ENCODE measurements at regions of chr12 and their contacts with region 1.

Region 1: GRCh38 chr12:14845350-14845750 is 2.0 kb upstream of the ART4 start:
- DNase-seq: peak; percentile 40 to 52
- H3K4me3 ChIP-seq: no peak overlapping the region
- H3K27ac ChIP-seq: no peak overlapping the region
- H3K4me1 ChIP-seq: peaks cover 33% of the 10 kb centered on the region
- H3K27me3 ChIP-seq: no peaks in the 10 kb centered on the region
- CTCF ChIP-seq: peak; percentile 93

Region 2: DNA sequence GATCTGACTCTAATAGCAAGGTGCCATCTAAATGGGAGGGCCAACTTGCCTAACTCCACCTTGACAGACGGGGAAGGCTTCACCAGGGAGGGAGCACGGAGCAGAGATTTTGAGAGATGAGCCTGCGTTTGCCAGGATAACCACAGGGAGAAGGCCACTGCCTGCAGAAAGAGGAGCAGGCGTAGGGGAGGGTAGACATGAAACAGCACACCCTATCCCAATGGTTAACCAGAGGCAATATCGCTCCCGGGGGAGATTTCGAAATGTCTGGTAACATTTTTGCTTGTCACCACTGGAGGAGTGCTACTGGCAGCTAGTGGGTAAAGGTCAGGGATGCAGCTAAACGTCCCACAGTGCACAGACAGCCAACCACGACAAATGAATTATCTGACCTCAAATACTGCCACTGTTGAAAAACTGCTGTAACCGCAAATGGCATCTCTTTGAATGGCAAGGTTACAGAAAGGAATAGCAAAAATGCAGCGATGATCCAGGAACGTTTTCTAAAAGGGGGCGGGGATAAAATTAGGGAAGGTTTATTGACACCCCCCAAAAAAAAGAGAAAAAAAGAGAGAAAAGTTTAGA is 605.9 kb before region 1 on chr12:
- CTCF ChIA-PET with region 1: no interaction called
- POLR2A ChIA-PET with region 1: no interaction called
- intact Hi-C with region 1: loop called (anchors 10 kb)
- DNase-seq: peak; percentile 84 to 93
- H3K4me3 ChIP-seq: peak overlapping the region; percentile 51
- H3K27ac ChIP-seq: peak overlapping the region; percentile 94
- H3K4me1 ChIP-seq: peaks cover 28% of the 10 kb centered on the region
- H3K27me3 ChIP-seq: no peaks in the 10 kb centered on the region
- CTCF ChIP-seq: no peak

Region 3: DNA sequence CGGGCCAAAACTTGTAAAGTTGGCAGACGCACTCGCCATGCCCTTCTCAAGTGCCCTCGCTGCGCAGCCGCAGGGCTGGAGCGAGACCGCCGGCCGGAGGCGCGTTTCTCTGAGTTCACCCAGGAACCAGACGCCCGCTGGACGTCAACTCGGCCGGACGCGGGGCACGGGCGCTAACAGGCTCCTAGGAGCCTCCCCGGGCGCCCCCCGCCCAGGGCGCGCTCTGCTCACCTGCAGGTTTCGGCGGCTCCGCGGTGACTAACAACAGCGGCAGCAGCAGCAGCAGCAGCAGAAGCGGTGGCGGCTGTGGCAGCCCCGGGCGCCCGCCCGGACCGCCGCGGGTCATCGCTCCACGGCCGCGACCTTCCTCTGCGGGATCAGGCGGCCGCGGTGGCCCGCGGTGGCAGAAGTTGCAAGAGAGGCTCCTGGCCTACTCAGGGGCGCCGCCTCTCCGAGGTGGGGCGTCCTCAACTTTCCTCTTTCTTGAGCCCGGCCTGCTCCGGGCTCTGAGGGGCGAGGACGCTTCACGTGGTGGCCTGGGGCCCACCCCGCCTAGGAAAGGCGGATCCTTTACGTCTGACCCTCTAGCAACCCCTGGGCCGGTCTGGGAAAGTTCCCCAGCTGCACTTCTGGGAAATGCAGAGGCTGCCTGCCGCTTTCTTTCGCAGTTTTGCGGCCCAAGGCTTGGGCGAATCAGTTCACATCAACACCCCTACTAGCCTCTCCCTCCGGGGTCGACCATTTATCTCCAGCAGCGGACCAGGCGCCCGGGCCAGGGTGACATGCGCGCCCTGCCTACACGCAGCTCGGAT is 277.8 kb before region 1 on chr12 and contains the start of gene PLBD1:
- CTCF ChIA-PET with region 1: no interaction called
- POLR2A ChIA-PET with region 1: no interaction called
- intact Hi-C with region 1: no loop called
- DNase-seq: peak; percentile 40 to 59
- H3K4me3 ChIP-seq: peak within 1 kb of the TSS; percentile 60
- H3K27ac ChIP-seq: no peak within 1 kb of the TSS
- H3K4me1 ChIP-seq: no peaks in the 10 kb centered on the region
- H3K27me3 ChIP-seq: no peaks in the 10 kb centered on the region
- CTCF ChIP-seq: no peak
- total RNA-seq, gene PLBD1: 13.8 and 17.8 TPM in 2 replicates

Region 4: DNA sequence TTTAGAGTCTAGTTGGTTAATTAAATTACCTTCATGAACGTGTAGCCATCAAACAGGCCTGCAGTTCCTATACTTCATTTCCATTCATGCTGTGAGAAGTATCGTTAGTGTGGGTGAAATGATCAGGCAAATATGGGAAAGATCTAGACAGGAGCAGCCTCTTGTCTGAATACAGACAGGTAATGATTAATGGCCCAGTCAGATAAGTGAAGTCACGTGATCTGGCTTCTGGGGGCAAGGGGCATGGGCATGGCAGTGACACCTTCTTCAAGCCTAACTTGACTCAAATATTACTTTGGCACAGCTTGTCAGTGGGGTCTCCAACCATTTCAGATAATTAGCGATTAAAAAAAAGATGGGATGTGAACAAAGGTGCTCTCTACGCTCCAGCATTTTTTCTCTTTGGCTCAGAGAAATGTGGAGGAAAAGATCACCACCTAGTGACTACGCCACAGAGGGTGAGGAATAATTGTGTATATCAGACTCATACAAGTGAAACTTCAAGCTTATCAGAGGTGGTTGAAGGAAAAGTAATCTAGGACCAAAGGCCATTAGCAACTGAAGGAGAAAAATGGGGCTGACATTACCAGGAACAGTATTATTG is 166.7 kb before region 1 on chr12:
- CTCF ChIA-PET with region 1: no interaction called
- POLR2A ChIA-PET with region 1: no interaction called
- intact Hi-C with region 1: no loop called
- DNase-seq: no peak
- H3K4me3 ChIP-seq: no peak overlapping the region
- H3K27ac ChIP-seq: no peak overlapping the region
- H3K4me1 ChIP-seq: no peaks in the 10 kb centered on the region
- H3K27me3 ChIP-seq: no peaks in the 10 kb centered on the region; the same call in 1 of the 2 replicates
- CTCF ChIP-seq: no peak

Region 5: DNA sequence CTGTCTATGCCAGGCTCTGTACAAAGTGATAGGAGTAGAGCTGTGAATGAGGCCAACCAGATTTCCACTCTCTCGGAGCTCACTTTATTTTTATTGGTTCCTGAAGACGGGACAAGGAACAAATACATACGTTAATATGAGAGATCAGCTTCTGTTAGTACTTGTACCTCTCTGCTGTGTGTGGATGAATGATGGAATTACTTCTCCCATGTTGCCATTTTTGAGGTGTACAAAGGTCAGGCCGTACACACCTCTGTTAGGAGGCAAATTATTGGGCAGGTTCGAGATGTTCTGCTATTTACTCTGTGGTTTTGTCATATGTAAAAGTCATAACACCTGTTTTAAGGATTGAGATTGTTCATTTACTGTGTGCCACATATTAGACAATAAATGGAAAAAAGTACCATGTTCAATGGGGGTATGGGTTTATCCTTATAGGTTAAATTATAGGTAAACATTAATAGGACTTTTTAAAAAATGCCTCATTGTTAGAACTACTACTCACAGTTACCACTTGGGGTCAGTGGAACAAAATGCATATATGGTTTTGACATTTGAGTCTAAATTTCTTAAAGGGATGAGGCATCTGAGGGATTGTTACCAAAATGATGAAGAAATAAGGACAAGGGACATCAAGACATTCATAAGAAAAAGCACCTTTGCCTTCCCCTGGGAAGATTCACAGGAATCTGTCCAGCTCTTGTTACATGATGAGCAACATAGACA is 69.0 kb before region 1 on chr12:
- CTCF ChIA-PET with region 1: interaction called, 3 read pairs
- POLR2A ChIA-PET with region 1: no interaction called
- intact Hi-C with region 1: loop called (anchors 1 kb)
- DNase-seq: peak in 1 of 2 experiments; percentile 49
- H3K4me3 ChIP-seq: peak overlapping the region; percentile 91
- H3K27ac ChIP-seq: peak overlapping the region; percentile 89
- H3K4me1 ChIP-seq: peaks cover 41% of the 10 kb centered on the region
- H3K27me3 ChIP-seq: no peaks in the 10 kb centered on the region
- CTCF ChIP-seq: peak; percentile 46; the same call in 1 of the 2 replicates

Region 6: DNA sequence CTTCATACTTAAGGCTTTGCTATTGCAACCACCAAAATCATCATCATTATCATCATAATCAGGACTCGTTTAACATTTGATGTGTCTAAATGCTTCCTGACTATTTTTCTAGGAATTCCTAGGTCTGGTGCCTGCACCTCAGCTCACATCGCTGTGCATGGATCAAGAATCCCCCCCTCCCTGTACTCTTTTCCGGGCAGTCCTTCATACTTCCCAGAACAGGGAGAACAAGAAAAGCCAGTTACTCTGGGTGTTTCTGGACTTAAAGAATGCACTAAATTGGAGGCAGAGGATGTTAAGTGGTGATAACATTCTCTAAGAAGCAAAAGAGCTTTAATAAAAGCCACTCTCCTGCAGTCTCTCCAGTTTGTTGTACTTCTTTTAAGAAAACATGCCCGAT is 83.6 kb after region 1 on chr12:
- CTCF ChIA-PET with region 1: interaction called, 4 read pairs
- POLR2A ChIA-PET with region 1: no interaction called
- intact Hi-C with region 1: loop called (anchors 1 kb)
- DNase-seq: peak; percentile 84 to 97
- H3K4me3 ChIP-seq: peak overlapping the region; percentile 50
- H3K27ac ChIP-seq: peak overlapping the region; percentile 78
- H3K4me1 ChIP-seq: peaks cover 72% of the 10 kb centered on the region
- H3K27me3 ChIP-seq: no peaks in the 10 kb centered on the region
- CTCF ChIP-seq: no peak

Region 7: GRCh38 chr12:14986449-14986848 is 141.1 kb after region 1 on chr12:
- CTCF ChIA-PET with region 1: no interaction called
- POLR2A ChIA-PET with region 1: no interaction called
- intact Hi-C with region 1: loop called (anchors 2 kb)
- DNase-seq: no peak
- H3K4me3 ChIP-seq: no peak overlapping the region
- H3K27ac ChIP-seq: no peak overlapping the region
- H3K4me1 ChIP-seq: no peaks in the 10 kb centered on the region
- H3K27me3 ChIP-seq: no peaks in the 10 kb centered on the region
- CTCF ChIP-seq: no peak; the same call in 1 of the 2 replicates

Region 8: GRCh38 chr12:15220994-15221885 is 375.9 kb after region 1 on chr12 and contains the start of gene RERG:
- CTCF ChIA-PET with region 1: no interaction called
- POLR2A ChIA-PET with region 1: no interaction called
- intact Hi-C with region 1: loop called (anchors 2 kb)
- DNase-seq: peak; percentile 44 to 87
- H3K4me3 ChIP-seq: peak within 1 kb of the TSS; percentile 41; the same call in 1 of the 2 replicates
- H3K27ac ChIP-seq: no peak within 1 kb of the TSS
- H3K4me1 ChIP-seq: 0 out of 2 replicates have a peak, but pooled peaks cover 6% of the 10 kb centered on the region
- H3K27me3 ChIP-seq: no peaks in the 10 kb centered on the region
- CTCF ChIP-seq: peak; percentile 85
- total RNA-seq, gene RERG: 0.50 and 1.4 TPM in 2 replicates

Region 9: DNA sequence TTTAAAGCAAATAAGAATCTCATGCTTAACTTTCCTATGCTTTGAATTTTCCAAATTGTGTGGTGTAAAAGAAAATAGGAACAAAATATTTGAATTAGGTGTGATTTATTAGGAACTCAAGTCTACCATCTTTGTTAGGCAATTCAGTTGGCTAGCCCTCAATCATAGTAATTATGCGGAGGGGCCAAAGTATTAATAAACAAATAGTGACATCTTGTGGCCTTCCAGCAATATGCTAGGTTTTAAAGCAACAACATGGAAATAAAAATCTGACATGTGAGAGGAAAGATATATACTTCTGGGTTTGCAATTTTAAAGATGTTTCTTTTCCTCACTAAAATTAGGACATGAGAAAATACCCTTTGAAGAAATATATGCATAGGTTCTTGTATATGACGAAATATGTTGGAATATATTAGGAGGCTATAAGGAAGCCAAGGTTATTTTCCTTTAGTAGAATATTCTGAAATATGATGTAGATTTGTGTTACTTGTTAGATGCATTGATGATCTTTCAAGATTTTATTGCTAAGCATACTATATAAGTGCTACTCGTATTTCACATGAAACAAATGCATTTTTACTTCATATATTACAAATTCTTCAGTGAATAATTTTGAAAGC is 677.3 kb after region 1 on chr12:
- CTCF ChIA-PET with region 1: no interaction called
- POLR2A ChIA-PET with region 1: no interaction called
- intact Hi-C with region 1: loop called (anchors 1 kb)
- DNase-seq: peak in 1 of 2 experiments; percentile 56
- H3K4me3 ChIP-seq: no peak overlapping the region
- H3K27ac ChIP-seq: no peak overlapping the region
- H3K4me1 ChIP-seq: 0 out of 2 replicates have a peak, but pooled peaks cover 5% of the 10 kb centered on the region
- H3K27me3 ChIP-seq: no peaks in the 10 kb centered on the region
- CTCF ChIP-seq: peak; percentile 76